Dendritic cell treated with granulocyte-macrophage colony-stimulating factor and Interleukin-4, amounts not matched to agents 40 ng/mL and 50 ng/mL, for 4 days (primary cell): ENCODE measurements at regions of chr11 and their contacts with region 1.

Region 1: GRCh38 chr11:133163463-133164419 is 368.6 kb downstream of the OPCML start:
- H3K4me3 Mint-ChIP-seq: no peak overlapping the region
- H3K27ac Mint-ChIP-seq: no peak overlapping the region
- H3K4me1 Mint-ChIP-seq: no peaks in the 10 kb centered on the region
- H3K27me3 Mint-ChIP-seq: peaks cover 3% of the 10 kb centered on the region

Region 2: DNA sequence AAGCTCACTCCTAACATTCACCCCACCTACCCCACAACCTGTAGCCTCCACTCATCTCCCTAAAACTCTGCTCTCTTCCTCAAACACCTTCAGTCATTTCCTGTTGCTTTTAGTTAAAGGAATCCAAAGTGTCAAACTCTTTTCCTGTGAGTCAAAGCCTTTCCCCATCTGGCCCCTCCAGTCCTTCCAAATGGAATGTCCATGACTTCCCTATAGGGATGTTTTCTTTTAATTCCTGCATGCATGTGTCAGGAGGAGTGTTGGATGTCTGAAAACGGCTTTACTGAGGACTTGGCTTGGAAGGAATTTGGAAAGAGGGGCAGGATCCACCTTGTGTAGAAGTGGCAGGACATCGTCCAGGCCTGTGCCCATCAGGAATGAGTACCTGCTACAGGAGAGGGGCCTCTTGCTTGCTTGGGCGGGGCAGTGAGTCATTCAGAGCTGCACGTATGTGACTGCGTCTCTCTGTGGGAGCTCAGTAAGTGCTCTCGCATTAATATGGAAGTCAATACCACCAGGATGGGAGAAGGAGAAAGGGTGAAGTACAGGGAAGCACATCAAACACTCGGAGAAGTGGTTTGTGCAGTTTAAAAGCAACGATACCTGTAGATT is 123.3 kb before region 1 on chr11:
- intact Hi-C with region 1: no loop called
- H3K4me3 Mint-ChIP-seq: no peak overlapping the region
- H3K27ac Mint-ChIP-seq: no peak overlapping the region
- H3K4me1 Mint-ChIP-seq: no peaks in the 10 kb centered on the region
- H3K27me3 Mint-ChIP-seq: no peaks in the 10 kb centered on the region

Region 3: DNA sequence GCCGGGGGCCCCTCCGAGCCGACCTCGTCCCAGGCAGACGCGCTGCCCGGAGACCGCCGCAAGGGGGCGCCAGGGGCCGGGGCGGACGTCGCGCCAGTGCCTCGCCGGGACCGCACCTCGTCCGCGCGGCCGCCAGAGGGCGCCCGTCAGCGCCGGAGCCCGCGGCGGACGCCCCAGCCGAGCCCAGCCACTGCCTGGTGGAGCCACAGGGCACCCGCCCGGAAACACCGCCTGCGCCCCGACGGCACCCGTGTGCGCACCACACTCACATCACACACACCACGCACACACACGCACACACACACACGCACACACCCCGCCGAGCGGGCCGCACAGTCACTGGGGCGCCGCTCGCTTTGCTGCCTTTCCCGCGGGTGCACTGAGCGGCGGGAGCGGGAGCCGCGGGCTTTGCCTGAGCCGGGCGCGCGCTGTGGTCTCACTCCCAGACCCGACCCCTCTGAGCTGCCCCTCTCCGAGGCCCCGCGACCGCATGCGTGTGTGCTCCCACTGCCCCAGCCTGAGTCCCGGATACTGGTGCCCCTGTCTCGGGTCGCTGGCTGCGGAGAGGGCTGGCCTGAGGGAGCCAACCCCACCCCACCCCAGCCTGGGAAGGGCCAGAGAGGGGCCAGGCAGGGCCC is 80.8 kb before region 1 on chr11:
- intact Hi-C with region 1: loop called (anchors 10 kb)
- H3K4me3 Mint-ChIP-seq: peak overlapping the region; percentile 78
- H3K27ac Mint-ChIP-seq: no peak overlapping the region
- H3K4me1 Mint-ChIP-seq: peaks cover 6% of the 10 kb centered on the region
- H3K27me3 Mint-ChIP-seq: peaks cover 47% of the 10 kb centered on the region